Right cardiac atrium (tissue), 5 donors: ENCODE measurements at regions of chr2 and their contacts with region 1.

Region 1: GRCh38 chr2:197705121-197705911 is at the start of gene MARS2:
- DNase-seq: peak; percentile 96 to 98 (median 98)
- ATAC-seq: peak; percentile 97
- H3K4me3 ChIP-seq: peak within 1 kb of the TSS; percentile 79
- H3K27ac ChIP-seq: peak within 1 kb of the TSS; percentile 43
- H3K4me1 ChIP-seq: peaks cover 9% of the 10 kb centered on the region
- H3K27me3 ChIP-seq: no peaks in the 10 kb centered on the region
- total RNA-seq, gene MARS2: 4.6 to 7.7 (median 5.6) TPM

Region 2: DNA sequence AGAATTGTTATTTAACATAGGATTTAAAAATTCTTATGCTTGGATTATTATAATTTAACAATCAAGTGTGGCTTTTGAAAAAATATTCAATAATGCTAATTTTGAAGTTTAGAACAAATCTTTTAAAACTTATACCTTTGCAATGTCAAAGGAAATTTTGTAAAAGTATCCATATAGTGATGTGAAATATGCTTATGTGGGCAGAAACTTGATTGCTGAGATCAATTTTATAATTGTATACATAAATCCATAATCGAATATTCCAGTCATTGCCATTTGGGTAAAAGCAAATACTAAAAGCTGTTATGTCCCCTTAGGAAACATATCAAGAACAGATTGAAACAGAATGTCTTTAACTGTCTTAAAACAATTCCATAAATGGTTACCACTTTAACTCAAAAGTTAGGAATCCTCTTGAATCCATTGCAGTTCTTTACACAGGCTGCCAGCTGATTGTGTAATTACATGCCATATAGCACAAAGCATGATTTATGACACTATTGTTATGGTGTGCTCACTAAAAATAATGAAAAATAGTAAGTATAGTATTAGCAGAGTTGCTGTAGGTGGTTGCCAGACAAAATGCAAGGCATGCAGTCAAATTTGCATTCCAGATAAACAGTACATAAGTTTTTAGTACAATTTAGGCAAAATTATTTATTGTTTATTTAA is 123.3 kb after region 1 on chr2:
- intact Hi-C with region 1: no loop called
- DNase-seq: no peak
- ATAC-seq: no peak
- H3K4me3 ChIP-seq: no peak overlapping the region
- H3K27ac ChIP-seq: no peak overlapping the region
- H3K4me1 ChIP-seq: no peaks in the 10 kb centered on the region
- H3K27me3 ChIP-seq: no peaks in the 10 kb centered on the region

Region 3: DNA sequence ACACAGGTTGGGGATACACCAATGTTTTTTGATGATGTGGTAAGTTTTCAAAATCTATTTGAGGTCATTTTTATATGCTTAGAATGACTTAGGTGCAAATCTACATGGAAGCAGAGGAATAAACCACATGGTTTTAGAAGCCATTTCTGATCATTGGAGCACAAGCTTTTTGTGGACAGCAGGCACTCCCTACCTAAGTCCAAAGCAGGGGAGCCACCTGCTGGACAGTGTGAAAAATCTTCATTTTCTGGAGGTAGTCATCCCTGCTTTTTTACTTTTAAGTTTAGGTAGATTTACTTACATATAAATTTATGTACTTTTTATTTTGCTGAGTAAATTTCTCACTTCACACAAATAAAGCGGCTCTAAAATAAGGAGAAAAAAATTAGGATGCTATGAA is 422.3 kb after region 1 on chr2:
- intact Hi-C with region 1: loop called in 2 of 4 experiments (anchors 10 kb)
- DNase-seq: peak; percentile 35 to 53 (median 35)
- ATAC-seq: peak; percentile 68 to 71
- H3K4me3 ChIP-seq: no peak overlapping the region
- H3K27ac ChIP-seq: no peak overlapping the region
- H3K4me1 ChIP-seq: no peaks in the 10 kb centered on the region
- H3K27me3 ChIP-seq: no peaks in the 10 kb centered on the region

Region 4: DNA sequence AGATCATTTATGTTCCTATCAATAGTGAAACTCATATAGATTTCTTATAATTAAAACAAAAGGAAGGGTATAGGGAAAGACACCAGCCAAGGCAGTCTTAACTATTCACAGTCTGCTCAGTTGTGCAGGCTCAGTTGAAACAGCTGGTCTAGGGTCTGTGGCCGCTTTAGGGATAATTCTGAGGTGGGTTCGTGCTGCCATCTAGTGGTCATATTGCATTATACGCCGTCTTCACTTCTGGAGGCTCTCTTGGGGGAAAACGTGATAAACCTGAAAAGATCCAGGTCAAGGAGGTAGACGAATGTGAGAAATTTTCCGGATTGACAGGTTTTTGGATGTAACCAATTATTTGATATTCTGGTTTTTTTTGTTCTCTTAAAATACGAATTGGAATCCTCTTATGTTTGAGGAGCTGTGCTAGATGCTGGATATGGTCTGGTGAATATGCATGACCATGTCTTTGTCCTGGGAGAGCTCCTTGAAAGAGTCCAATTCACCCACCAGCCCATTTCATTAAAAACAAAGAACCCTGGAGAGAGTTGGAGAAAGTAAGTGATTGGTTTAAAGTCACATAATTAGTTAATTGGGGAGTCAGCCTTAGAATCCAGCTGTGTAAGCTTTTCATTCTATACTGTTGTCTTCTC is 591.5 kb after region 1 on chr2:
- intact Hi-C with region 1: loop called in 2 of 4 experiments (anchors 10 kb)
- DNase-seq: peak in 2 of 3 donors; percentile 29 to 52
- ATAC-seq: peak; percentile 73 to 79
- H3K4me3 ChIP-seq: no peak overlapping the region
- H3K27ac ChIP-seq: no peak overlapping the region
- H3K4me1 ChIP-seq: no peaks in the 10 kb centered on the region
- H3K27me3 ChIP-seq: no peaks in the 10 kb centered on the region